CD14-positive monocyte (primary cell): ENCODE measurements at regions of chr9 and their contacts with region 1.

Region 1: GRCh38 chr9:104810421-104811339 is 46.8 kb downstream of the NIPSNAP3B start:
- DNase-seq: no peak
- H3K4me3 ChIP-seq: no peak overlapping the region
- H3K4me3 Mint-ChIP-seq: no peak overlapping the region
- H3K27ac ChIP-seq: no peak overlapping the region
- H3K27ac Mint-ChIP-seq: no peak overlapping the region
- H3K4me1 ChIP-seq: no peaks in the 10 kb centered on the region
- H3K4me1 Mint-ChIP-seq: no peaks in the 10 kb centered on the region
- H3K27me3 ChIP-seq: no peaks in the 10 kb centered on the region
- H3K27me3 Mint-ChIP-seq: no peaks in the 10 kb centered on the region
- CTCF ChIP-seq: no peak

Region 2: GRCh38 chr9:104448036-104448435 is 362.6 kb before region 1 on chr9:
- intact Hi-C with region 1: no loop called
- DNase-seq: no peak
- H3K4me3 ChIP-seq: no peak overlapping the region
- H3K4me3 Mint-ChIP-seq: no peak overlapping the region
- H3K27ac ChIP-seq: no peak overlapping the region
- H3K27ac Mint-ChIP-seq: no peak overlapping the region
- H3K4me1 ChIP-seq: no peaks in the 10 kb centered on the region
- H3K4me1 Mint-ChIP-seq: no peaks in the 10 kb centered on the region
- H3K27me3 ChIP-seq: no peaks in the 10 kb centered on the region
- H3K27me3 Mint-ChIP-seq: peaks cover 0 to 5% (median 0%) of the 10 kb centered on the region in 3 donors
- CTCF ChIP-seq: no peak

Region 3: GRCh38 chr9:104784098-104784497 is 26.6 kb before region 1 on chr9:
- intact Hi-C with region 1: no loop called
- DNase-seq: peak in 2 of 3 donors; percentile 18 to 32
- H3K4me3 ChIP-seq: no peak overlapping the region
- H3K4me3 Mint-ChIP-seq: peak overlapping the region in 1 of 2 donors; percentile 46
- H3K27ac ChIP-seq: peak overlapping the region in 1 of 2 donors; percentile 42
- H3K27ac Mint-ChIP-seq: peak overlapping the region in 5 of 7 donors; percentile 18 to 56 (median 39)
- H3K4me1 ChIP-seq: peaks cover 22 to 30% of the 10 kb centered on the region in 2 donors
- H3K4me1 Mint-ChIP-seq: peaks cover 22% of the 10 kb centered on the region
- H3K27me3 ChIP-seq: no peaks in the 10 kb centered on the region
- H3K27me3 Mint-ChIP-seq: no peaks in the 10 kb centered on the region
- CTCF ChIP-seq: no peak

Region 4: GRCh38 chr9:104826907-104827306 is 16.2 kb after region 1 on chr9:
- intact Hi-C with region 1: no loop called
- DNase-seq: no peak
- H3K4me3 ChIP-seq: no peak overlapping the region
- H3K4me3 Mint-ChIP-seq: no peak overlapping the region
- H3K27ac ChIP-seq: no peak overlapping the region
- H3K27ac Mint-ChIP-seq: peak overlapping the region in 1 of 7 donors; percentile 25
- H3K4me1 ChIP-seq: peaks cover 20 to 22% of the 10 kb centered on the region in 2 donors
- H3K4me1 Mint-ChIP-seq: peaks cover 20% of the 10 kb centered on the region
- H3K27me3 ChIP-seq: no peaks in the 10 kb centered on the region
- H3K27me3 Mint-ChIP-seq: no peaks in the 10 kb centered on the region
- CTCF ChIP-seq: no peak

Region 5: GRCh38 chr9:104841601-104842141 is 31.0 kb after region 1 on chr9:
- intact Hi-C with region 1: no loop called
- DNase-seq: no peak
- H3K4me3 ChIP-seq: no peak overlapping the region
- H3K4me3 Mint-ChIP-seq: no peak overlapping the region
- H3K27ac ChIP-seq: no peak overlapping the region
- H3K27ac Mint-ChIP-seq: peak overlapping the region in 2 of 7 donors; percentile 22 to 43
- H3K4me1 ChIP-seq: peaks cover 2 to 3% of the 10 kb centered on the region in 2 donors
- H3K4me1 Mint-ChIP-seq: peaks cover 4% of the 10 kb centered on the region
- H3K27me3 ChIP-seq: no peaks in the 10 kb centered on the region
- H3K27me3 Mint-ChIP-seq: no peaks in the 10 kb centered on the region
- CTCF ChIP-seq: no peak

Region 6: GRCh38 chr9:105425841-105426436 is 615.3 kb after region 1 on chr9:
- intact Hi-C with region 1: loop called in 1 of 2 experiments (anchors 10 kb)
- DNase-seq: no peak
- H3K4me3 ChIP-seq: no peak overlapping the region
- H3K4me3 Mint-ChIP-seq: no peak overlapping the region
- H3K27ac ChIP-seq: no peak overlapping the region
- H3K27ac Mint-ChIP-seq: no peak overlapping the region
- H3K4me1 ChIP-seq: no peaks in the 10 kb centered on the region
- H3K4me1 Mint-ChIP-seq: no peaks in the 10 kb centered on the region
- H3K27me3 ChIP-seq: no peaks in the 10 kb centered on the region
- H3K27me3 Mint-ChIP-seq: peaks cover 0 to 1% (median 0%) of the 10 kb centered on the region in 3 donors
- CTCF ChIP-seq: peak; percentile 59